ENCODE measurements at regions of chr11 and their contacts with region 1.

Region 1: GRCh38 chr11:33266393-33267215 is 9.4 kb downstream of the HIPK3 start:
- DNase-seq: no peak
- ATAC-seq: no peak
- H3K4me3 ChIP-seq: no peak overlapping the region
- H3K4me3 Mint-ChIP-seq: no peak overlapping the region
- H3K27ac ChIP-seq: no peak overlapping the region
- H3K27ac Mint-ChIP-seq: no peak overlapping the region
- H3K4me1 ChIP-seq: peaks cover 16% of the 10 kb centered on the region
- H3K4me1 Mint-ChIP-seq: peaks cover 52% of the 10 kb centered on the region
- H3K27me3 ChIP-seq: no peaks in the 10 kb centered on the region
- H3K27me3 Mint-ChIP-seq: no peaks in the 10 kb centered on the region
- CTCF ChIP-seq: no peak

Region 2: GRCh38 chr11:33307984-33308383 is 41.4 kb after region 1 on chr11:
- CTCF ChIA-PET with region 1: no interaction called
- POLR2A ChIA-PET with region 1: no interaction called
- intact Hi-C with region 1: loop called in 1 of 2 experiments (anchors 5 kb)
- DNase-seq: no peak
- ATAC-seq: no peak
- H3K4me3 ChIP-seq: no peak overlapping the region
- H3K4me3 Mint-ChIP-seq: no peak overlapping the region
- H3K27ac ChIP-seq: no peak overlapping the region
- H3K27ac Mint-ChIP-seq: no peak overlapping the region
- H3K4me1 ChIP-seq: peaks cover 4% of the 10 kb centered on the region
- H3K4me1 Mint-ChIP-seq: peaks cover 64% of the 10 kb centered on the region
- H3K27me3 ChIP-seq: no peaks in the 10 kb centered on the region
- H3K27me3 Mint-ChIP-seq: no peaks in the 10 kb centered on the region
- CTCF ChIP-seq: no peak